PC-3 (cell line): ENCODE measurements at regions of chr7 and their contacts with region 1.

Region 1: GRCh38 chr7:7182156-7183060 is at the start of gene C1GALT1:
- DNase-seq: peak; percentile 96
- ATAC-seq: peak; percentile 82
- H3K4me3 ChIP-seq: peak within 1 kb of the TSS; percentile 87
- H3K27ac ChIP-seq: peak within 1 kb of the TSS; percentile 63
- H3K4me1 ChIP-seq: peaks cover 35% of the 10 kb centered on the region
- H3K27me3 ChIP-seq: no peaks in the 10 kb centered on the region
- CTCF ChIP-seq: peak; percentile 39
- total RNA-seq, gene C1GALT1: 19.3 and 32.3 TPM in 2 replicates

Region 2: GRCh38 chr7:7122701-7123281 is 59.6 kb before region 1 on chr7:
- CTCF ChIA-PET with region 1: no interaction called
- POLR2A ChIA-PET with region 1: no interaction called
- intact Hi-C with region 1: loop called (anchors 1 kb)
- DNase-seq: peak; percentile 46
- ATAC-seq: peak; percentile 70
- H3K4me3 ChIP-seq: no peak overlapping the region
- H3K27ac ChIP-seq: peak overlapping the region; percentile 33
- H3K4me1 ChIP-seq: peaks cover 16% of the 10 kb centered on the region
- H3K27me3 ChIP-seq: no peaks in the 10 kb centered on the region
- CTCF ChIP-seq: no peak

Region 3: GRCh38 chr7:7321720-7322128 is 139.3 kb after region 1 on chr7:
- CTCF ChIA-PET with region 1: no interaction called
- POLR2A ChIA-PET with region 1: interaction called, 10 read pairs
- intact Hi-C with region 1: loop called (anchors 1 kb)
- DNase-seq: peak; percentile 94
- ATAC-seq: peak; percentile 99
- H3K4me3 ChIP-seq: no peak overlapping the region
- H3K27ac ChIP-seq: peak overlapping the region; percentile 71
- H3K4me1 ChIP-seq: peaks cover 24% of the 10 kb centered on the region
- H3K27me3 ChIP-seq: no peaks in the 10 kb centered on the region
- CTCF ChIP-seq: no peak

Region 4: DNA sequence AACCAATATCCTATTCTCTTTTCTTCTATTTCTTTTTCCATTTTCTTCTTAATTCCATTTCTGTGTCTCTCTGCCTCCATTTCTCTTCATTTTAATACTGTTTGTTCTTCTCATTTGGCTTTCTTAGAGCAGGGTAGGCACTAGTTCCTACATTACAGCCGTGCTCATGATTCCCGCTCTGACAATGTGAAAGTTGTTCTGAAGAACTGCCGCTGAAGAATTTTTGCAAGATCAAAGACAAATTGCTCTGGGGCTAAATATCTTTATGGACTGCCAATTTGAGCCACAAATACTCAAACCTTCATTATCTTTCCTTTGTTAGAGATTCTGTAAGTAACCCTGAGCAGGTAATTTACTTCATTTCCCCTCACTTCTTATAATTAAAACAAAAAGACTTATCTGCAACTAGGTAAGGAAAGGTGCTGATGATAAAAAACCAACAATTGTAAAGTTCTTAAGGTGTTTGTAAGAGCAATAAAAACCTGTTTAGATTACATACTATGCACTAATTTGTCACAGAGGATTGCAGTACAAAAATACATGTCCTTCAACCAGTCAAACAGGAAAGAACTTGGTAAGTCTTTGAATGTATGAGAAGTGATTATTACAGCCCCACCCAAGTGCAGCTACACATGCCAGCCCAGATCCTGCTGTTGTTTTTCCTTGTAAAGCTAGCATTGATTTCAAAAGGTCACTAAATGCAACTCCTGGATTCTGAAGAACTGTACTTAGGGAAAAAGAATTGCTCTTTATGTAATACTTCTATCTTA is 225.8 kb after region 1 on chr7:
- CTCF ChIA-PET with region 1: no interaction called
- POLR2A ChIA-PET with region 1: no interaction called
- intact Hi-C with region 1: loop called (anchors 5 kb)
- DNase-seq: peak; percentile 48
- ATAC-seq: peak; percentile 91
- H3K4me3 ChIP-seq: no peak overlapping the region
- H3K27ac ChIP-seq: no peak overlapping the region
- H3K4me1 ChIP-seq: peaks cover 16% of the 10 kb centered on the region; the same call in 1 of the 2 replicates
- H3K27me3 ChIP-seq: no peaks in the 10 kb centered on the region
- CTCF ChIP-seq: no peak

Region 5: DNA sequence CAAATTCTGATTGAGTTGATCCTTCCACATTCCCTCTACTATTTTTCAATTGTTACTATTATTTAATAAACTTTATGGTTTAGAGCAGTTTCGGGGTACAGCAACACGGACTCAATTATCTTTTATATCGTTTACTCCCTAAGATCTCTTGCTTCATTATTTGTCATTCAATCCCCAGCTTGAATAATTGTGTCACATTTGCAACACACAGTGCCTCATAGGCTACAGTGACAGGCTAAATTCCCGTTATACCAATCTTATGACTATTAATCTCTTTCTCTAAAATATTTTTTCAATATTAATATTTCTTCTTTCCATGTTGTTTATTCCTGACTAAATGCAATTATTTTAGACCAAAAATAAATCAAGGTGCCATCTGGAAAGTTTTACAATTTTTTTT is 357.3 kb after region 1 on chr7:
- CTCF ChIA-PET with region 1: no interaction called
- POLR2A ChIA-PET with region 1: no interaction called
- intact Hi-C with region 1: loop called (anchors 2 kb)
- DNase-seq: no peak
- ATAC-seq: no peak
- H3K4me3 ChIP-seq: no peak overlapping the region
- H3K27ac ChIP-seq: no peak overlapping the region
- H3K4me1 ChIP-seq: peaks cover 6% of the 10 kb centered on the region; the same call in 1 of the 2 replicates
- H3K27me3 ChIP-seq: no peaks in the 10 kb centered on the region
- CTCF ChIP-seq: no peak